ENCODE measurements at regions of chr4 and their contacts with region 1.

Region 1: DNA sequence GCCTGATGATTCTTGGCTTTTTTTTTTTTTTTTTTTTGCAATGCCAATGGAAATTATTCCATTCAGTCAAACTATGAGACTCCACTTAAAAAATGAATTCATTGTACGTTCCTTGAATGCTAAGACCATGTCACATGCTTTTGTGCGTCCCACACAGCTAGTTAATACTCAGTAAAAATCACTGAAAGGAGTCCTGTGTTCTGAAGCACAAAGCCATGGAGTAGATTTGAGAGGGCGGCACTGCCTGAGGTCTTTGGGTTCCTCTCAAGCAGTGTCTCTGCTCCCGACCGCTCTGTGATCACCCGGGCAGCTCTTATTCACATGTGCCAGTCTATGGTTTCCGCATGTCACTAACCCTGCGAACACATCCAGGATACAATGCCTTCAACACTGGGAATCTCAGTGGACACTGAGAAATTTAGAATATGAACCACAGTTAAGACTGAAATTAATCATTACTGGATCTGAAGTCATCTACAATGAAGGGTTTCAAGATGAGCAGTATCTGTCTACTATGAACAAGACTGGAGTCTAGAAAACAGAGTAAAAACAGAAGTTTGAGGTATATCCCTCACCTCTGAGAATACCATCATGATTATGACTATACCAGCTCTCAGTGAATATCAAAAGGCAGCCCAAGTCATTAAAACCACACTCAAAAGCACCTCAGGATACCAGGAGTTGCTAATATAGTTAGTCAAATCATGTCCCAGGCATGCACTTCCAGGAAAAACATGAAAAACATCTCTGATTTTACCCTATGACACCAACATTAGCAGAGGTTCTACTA is 193.0 kb downstream of the MGST2 start:
- DNase-seq: no peak
- H3K4me3 Mint-ChIP-seq: no peak overlapping the region
- H3K27ac Mint-ChIP-seq: peak overlapping the region; percentile 61
- H3K4me1 Mint-ChIP-seq: peaks cover 41% of the 10 kb centered on the region
- H3K27me3 Mint-ChIP-seq: peaks cover 26% of the 10 kb centered on the region

Region 2: DNA sequence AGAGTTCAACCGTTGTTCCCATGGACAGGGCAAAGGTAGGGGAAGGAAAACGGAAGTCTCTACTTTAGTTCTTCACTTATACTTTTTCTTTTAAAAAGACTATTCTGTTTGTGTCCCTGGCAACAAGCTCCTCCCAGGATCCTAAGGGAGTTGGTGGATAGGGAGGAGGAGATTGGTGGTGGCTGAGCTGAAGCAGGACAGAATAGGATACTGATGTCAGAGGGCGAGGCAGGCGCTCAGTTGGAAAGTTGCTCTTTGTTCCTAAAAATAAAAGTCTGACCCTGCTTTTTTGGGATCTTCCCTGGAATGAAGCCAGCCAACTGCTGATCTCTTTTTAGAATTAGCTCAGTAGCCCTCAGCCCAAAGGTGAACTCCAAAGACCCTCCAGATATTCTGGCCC is 88.3 kb before region 1 on chr4:
- intact Hi-C with region 1: no loop called
- DNase-seq: no peak
- H3K4me3 Mint-ChIP-seq: no peak overlapping the region
- H3K27ac Mint-ChIP-seq: no peak overlapping the region
- H3K4me1 Mint-ChIP-seq: no peaks in the 10 kb centered on the region
- H3K27me3 Mint-ChIP-seq: peaks cover 5% of the 10 kb centered on the region

Region 3: GRCh38 chr4:139956507-139957017 is 97.9 kb after region 1 on chr4:
- intact Hi-C with region 1: no loop called
- DNase-seq: no peak
- H3K4me3 Mint-ChIP-seq: no peak overlapping the region
- H3K27ac Mint-ChIP-seq: no peak overlapping the region
- H3K4me1 Mint-ChIP-seq: peaks cover 2% of the 10 kb centered on the region
- H3K27me3 Mint-ChIP-seq: peaks cover 52% of the 10 kb centered on the region

Region 4: GRCh38 chr4:139988863-139989733 is 130.5 kb after region 1 on chr4:
- intact Hi-C with region 1: loop called (anchors 1 kb)
- DNase-seq: no peak
- H3K4me3 Mint-ChIP-seq: no peak overlapping the region
- H3K27ac Mint-ChIP-seq: no peak overlapping the region
- H3K4me1 Mint-ChIP-seq: peaks cover 12% of the 10 kb centered on the region
- H3K27me3 Mint-ChIP-seq: peaks cover 17% of the 10 kb centered on the region

Region 5: DNA sequence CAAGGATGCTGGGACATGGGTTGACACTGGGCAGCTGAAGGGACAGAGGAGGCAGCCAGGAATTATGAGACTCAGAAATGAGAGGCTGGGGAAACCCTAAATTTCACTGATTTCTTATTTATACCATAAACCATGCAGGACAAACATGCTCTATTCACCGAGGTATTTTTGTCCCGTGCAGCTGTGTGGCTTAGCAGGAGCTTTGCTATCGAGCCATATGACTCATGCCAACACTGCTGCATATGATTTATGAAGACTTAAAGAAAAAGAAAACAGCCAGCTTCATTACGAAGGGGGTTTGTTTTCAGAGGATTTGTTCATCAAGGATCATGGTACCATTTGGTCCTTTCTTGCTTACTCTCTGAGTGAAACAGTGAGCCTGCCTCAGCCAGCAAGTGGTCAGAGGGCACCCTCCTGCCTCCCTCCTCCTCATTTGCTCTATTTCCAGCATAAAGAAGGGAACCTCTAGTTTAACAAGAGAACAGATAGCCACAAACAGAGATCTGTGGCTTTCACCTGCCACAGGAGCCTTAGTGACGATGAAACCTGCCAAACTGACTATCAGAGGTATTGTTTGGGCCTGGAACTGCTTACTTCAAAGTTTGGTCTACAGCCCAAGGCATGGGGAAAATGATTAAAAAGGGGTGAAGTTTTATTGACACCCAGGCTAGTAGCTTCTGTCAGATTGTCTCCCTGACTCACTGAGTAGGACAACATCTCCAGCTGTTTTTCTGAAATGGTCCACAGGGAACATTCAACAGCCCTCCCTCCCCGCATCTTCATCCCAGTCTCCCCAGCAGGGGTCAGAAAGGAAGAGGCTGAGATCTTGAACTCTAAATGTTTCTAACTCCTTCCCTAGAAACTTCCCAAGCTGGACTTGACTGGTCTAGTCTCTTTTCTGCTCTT is 375.4 kb after region 1 on chr4:
- intact Hi-C with region 1: loop called (anchors 5 kb)
- DNase-seq: no peak
- H3K4me3 Mint-ChIP-seq: peak overlapping the region; percentile 42
- H3K27ac Mint-ChIP-seq: peak overlapping the region; percentile 97
- H3K4me1 Mint-ChIP-seq: peaks cover 35% of the 10 kb centered on the region
- H3K27me3 Mint-ChIP-seq: no peaks in the 10 kb centered on the region

Region 6: GRCh38 chr4:140266991-140267426 is 408.4 kb after region 1 on chr4:
- intact Hi-C with region 1: loop called (anchors 2 kb)
- DNase-seq: no peak
- H3K4me3 Mint-ChIP-seq: no peak overlapping the region
- H3K27ac Mint-ChIP-seq: no peak overlapping the region
- H3K4me1 Mint-ChIP-seq: peaks cover 18% of the 10 kb centered on the region
- H3K27me3 Mint-ChIP-seq: peaks cover 19% of the 10 kb centered on the region

Measured in activated T-helper 2 cell treated with anti-CD3 and anti-CD28 coated beads, Interferon-gamma antibody, Interleukin-2, Interleukin-4, amounts not matched to agents 10 μg/mL and 5 μg/mL and 100 μg/mL, durations not matched to agents 14 hours and 24 hours and 36 hours (primary cell).